ENCODE measurements at regions of chr2 and their contacts with region 1.

Region 1: DNA sequence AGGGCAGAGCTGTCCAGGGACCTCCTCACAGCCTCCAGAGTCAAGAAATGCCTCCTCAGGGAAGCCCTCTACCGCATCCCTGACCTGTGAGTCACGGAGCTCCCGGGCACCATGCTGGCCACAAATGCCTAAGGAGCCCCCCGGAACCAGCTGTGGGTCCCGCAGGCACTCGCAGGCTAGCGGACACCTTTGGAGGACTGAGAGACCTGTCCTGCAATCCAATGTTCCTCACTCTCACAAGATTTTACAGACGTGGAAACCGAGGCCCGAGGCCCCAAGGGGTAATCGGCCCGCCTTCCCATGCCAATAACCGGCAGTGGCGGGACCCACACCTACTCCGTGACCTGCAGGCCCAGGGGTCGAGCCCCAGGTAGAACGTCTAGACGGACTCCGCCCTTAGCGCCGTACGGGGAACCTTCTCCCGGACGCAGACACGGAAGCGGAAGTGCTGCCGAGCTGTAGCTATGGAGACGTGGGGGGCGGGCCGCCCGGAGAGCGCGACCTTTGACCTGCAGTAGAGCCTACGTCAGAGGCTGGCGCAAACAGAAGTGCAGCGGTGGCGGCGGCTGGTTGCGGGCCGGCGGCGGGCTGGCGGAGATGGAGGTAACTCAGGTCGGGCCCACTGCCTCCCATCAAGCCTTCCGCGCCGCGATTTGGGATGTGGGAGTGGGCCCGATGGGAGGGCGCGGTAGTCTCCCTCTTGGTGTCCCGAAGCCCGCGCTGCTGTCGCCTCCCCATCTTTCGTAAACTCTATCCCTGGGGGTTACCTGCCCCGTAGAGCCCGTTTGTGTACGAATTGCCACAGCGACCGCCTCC is at the start of gene GCC2:
- DNase-seq: peak; percentile 75
- ATAC-seq: peak; percentile 95
- H3K4me3 ChIP-seq: peak within 1 kb of the TSS; percentile 93
- H3K27ac ChIP-seq: peak within 1 kb of the TSS; percentile 86
- H3K4me1 ChIP-seq: peaks cover 7% of the 10 kb centered on the region
- H3K27me3 ChIP-seq: no peaks in the 10 kb centered on the region
- CTCF ChIP-seq: no peak
- EP300 ChIP-seq: peak in 1 of 2 experiments; percentile 38; a peak in 2 of 4 replicates
- POLR2A ChIP-seq: peak; percentile 95
- RAD21 ChIP-seq: no peak
- polyA plus RNA-seq, gene GCC2: 11.8 to 13.5 TPM

Region 2: GRCh38 chr2:108351889-108352288 is 97.0 kb before region 1 on chr2:
- CTCF ChIA-PET with region 1: no interaction called
- POLR2A ChIA-PET with region 1: no interaction called
- RAD21 ChIA-PET with region 1: no interaction called
- SMC1A ChIA-PET with region 1: no interaction called
- in situ Hi-C with region 1: no loop called
- intact Hi-C with region 1: loop called (anchors 5 kb)
- DNase-seq: no peak
- ATAC-seq: no peak
- H3K4me3 ChIP-seq: no peak overlapping the region
- H3K27ac ChIP-seq: no peak overlapping the region
- H3K4me1 ChIP-seq: no peaks in the 10 kb centered on the region
- H3K27me3 ChIP-seq: peaks cover 0 to under 1% of the 10 kb centered on the region in 2 experiments; a peak in 1 of 4 replicates
- CTCF ChIP-seq: no peak
- EP300 ChIP-seq: no peak
- POLR2A ChIP-seq: no peak
- RAD21 ChIP-seq: no peak

Region 3: DNA sequence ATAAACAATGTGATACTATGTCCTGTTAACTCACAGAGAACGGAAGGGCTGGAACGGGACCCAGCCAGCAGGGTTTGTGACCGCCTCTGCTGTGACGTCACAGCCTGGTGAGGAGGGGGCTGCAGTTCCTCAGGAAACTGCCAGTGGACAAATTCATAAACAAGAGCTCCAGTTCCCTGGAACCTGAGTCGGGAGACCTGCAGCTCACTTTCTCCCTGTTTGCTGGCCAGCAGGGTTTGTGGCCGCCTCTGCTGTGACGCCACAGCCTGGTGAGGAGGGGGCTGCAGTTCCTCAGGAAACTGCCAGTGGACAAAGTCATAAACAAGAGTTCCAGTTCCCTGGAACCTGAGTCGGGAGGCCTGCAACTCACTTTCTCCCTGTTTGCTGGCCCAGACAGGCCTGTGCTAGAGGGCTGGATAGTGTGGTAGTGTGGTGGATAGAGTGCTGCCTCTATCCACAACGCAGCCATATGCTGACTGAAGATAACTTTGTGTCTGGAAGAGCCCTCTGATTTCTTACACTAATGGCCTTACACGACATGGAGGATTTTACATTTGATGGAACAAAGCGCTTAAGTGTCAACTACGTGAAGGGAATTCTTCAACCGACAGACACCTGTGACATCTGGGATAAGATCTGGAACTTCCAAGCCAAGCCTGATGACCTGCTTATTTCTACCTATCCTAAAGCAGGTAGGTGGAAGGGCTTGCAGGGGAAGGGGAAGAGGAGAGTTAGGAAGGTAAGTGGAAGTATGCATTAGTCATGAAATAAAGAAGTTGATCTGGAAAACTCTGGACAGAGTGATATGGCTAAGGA is 70.9 kb before region 1 on chr2 and contains the start of gene SULT1C4:
- CTCF ChIA-PET with region 1: no interaction called
- POLR2A ChIA-PET with region 1: no interaction called
- RAD21 ChIA-PET with region 1: no interaction called
- SMC1A ChIA-PET with region 1: no interaction called
- in situ Hi-C with region 1: no loop called
- intact Hi-C with region 1: no loop called
- DNase-seq: no peak
- ATAC-seq: no peak
- H3K4me3 ChIP-seq: no peak within 1 kb of the TSS
- H3K27ac ChIP-seq: no peak within 1 kb of the TSS
- H3K4me1 ChIP-seq: no peaks in the 10 kb centered on the region
- H3K27me3 ChIP-seq: no peaks in the 10 kb centered on the region
- CTCF ChIP-seq: no peak
- EP300 ChIP-seq: no peak
- POLR2A ChIP-seq: no peak
- RAD21 ChIP-seq: no peak
- polyA plus RNA-seq, gene SULT1C4: not detected

Region 4: DNA sequence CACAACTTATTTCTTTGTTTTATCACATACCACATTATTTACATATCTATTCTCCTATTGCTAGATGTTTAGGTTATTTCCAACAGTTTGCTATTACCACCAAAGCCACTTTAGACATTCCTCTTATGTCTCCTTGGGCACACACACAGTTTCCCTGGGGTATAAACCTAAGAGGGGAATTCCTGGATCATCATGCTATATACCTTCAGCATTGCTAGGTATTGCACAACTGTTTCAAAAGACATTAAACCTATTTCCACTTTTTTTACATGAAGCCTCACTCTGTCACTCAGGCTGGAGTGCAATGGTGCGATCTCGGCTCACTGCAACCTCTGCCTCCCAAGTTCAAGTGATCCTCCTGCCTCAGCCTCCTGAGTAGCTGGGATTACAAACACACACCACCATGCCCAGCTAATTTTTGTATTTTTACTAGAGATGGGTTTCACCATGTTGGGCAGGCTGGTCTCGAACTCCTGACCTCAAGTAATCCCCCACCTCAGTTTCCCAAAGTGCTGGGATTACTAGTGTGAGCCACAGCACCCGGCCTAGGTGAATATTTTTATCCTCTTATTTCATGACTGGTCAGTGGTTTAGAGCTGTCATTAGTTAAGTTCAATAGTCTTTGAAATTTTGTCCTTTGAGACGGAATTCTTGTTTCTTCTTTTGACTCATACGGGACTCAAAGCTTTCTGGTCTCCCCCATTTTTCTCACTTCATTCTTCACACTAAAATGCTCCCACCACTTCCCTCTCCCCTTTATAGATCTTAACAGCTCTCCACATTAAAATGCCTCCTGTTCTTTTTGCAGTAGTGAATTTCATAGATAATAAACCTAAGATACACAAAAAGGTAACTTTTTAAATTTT is 40.8 kb before region 1 on chr2:
- CTCF ChIA-PET with region 1: interaction called, 4 read pairs
- POLR2A ChIA-PET with region 1: no interaction called
- RAD21 ChIA-PET with region 1: no interaction called
- SMC1A ChIA-PET with region 1: interaction called, 3 read pairs
- in situ Hi-C with region 1: no loop called
- intact Hi-C with region 1: loop called (anchors 2 kb)
- DNase-seq: peak; percentile 37
- ATAC-seq: peak; percentile 83
- H3K4me3 ChIP-seq: no peak overlapping the region
- H3K27ac ChIP-seq: no peak overlapping the region
- H3K4me1 ChIP-seq: no peaks in the 10 kb centered on the region
- H3K27me3 ChIP-seq: no peaks in the 10 kb centered on the region
- CTCF ChIP-seq: no peak
- EP300 ChIP-seq: no peak
- POLR2A ChIP-seq: no peak
- RAD21 ChIP-seq: no peak

Region 5: DNA sequence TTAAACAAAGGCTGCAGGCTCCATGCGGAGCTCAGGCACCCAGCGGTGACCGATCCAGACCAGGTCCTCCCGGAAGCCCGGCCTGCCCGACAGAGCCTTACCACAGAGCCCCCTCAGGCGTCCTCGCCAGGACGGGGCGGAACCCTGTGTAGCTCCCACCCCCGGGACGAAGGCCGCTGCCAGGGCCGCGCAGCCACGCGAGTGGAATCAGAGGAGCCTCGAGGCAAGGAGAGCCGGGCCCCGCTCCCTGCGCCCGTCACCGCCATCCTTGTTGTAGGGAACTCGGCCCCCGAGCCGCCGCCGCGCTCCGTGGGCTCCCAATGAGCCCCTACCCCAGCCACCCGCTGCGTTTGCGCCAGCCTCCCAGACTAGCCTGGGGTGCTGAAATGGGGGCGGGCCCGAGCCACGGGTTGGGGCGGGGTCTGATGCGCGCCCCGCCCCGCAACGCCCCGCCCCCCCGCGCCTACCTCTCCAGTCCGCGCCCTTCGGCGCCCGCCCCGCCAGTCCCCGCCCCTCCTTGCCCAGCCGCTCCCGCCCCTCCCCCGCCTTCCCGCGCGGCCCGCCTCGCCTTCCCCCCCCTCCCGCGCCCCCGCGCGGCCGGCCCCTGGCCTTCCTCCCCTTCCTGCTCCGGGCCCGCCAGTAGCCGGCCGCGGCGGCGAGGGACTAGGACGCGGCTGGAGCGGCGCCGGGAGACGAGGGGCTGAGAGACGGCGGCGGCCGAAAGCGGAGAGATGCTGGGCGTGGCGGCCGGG is 85.1 kb after region 1 on chr2 and contains the start of gene LIMS1:
- CTCF ChIA-PET with region 1: interaction called, 4 read pairs
- POLR2A ChIA-PET with region 1: interaction called, 9 read pairs
- RAD21 ChIA-PET with region 1: interaction called, 6 read pairs
- SMC1A ChIA-PET with region 1: interaction called, 23 read pairs
- in situ Hi-C with region 1: no loop called
- intact Hi-C with region 1: no loop called
- DNase-seq: peak; percentile 50
- ATAC-seq: peak; percentile 94
- H3K4me3 ChIP-seq: peak within 1 kb of the TSS; percentile 85
- H3K27ac ChIP-seq: peak within 1 kb of the TSS; percentile 66
- H3K4me1 ChIP-seq: no peaks in the 10 kb centered on the region; the same call in 1 of the 2 replicates
- H3K27me3 ChIP-seq: no peaks in the 10 kb centered on the region
- CTCF ChIP-seq: 0 out of 6 replicates have a peak, but pooled peaks of 1 of the 3 experiments have one; percentile 7
- EP300 ChIP-seq: no peak
- POLR2A ChIP-seq: peak; percentile 93
- RAD21 ChIP-seq: 0 out of 2 replicates have a peak, but pooled peaks have one; percentile 9
- polyA plus RNA-seq, gene LIMS1: 15.7 to 17.6 TPM

Measured in GM12878 (cell line).